CD4-positive, alpha-beta T cell (primary cell): ENCODE measurements at regions of chrX and their contacts with region 1.

Region 1: GRCh38 chrX:149539283-149540130 is 1.3 kb upstream of the EOLA1 start:
- DNase-seq: peak; percentile 77 to 96 (median 85)
- ATAC-seq: peak; percentile 52
- H3K4me3 ChIP-seq: peak overlapping the region; percentile 65
- H3K4me3 Mint-ChIP-seq: peak overlapping the region; percentile 89
- H3K27ac ChIP-seq: peak overlapping the region; percentile 56 to 58
- H3K27ac Mint-ChIP-seq: peak overlapping the region; percentile 96
- H3K4me1 ChIP-seq: peaks cover 16% of the 10 kb centered on the region
- H3K4me1 Mint-ChIP-seq: peaks cover 8% of the 10 kb centered on the region
- H3K27me3 ChIP-seq: no peaks in the 10 kb centered on the region
- H3K27me3 Mint-ChIP-seq: no peaks in the 10 kb centered on the region
- CTCF ChIP-seq: no peak

Region 2: GRCh38 chrX:149512225-149512885 is 27.2 kb before region 1 on chrX:
- CTCF ChIA-PET with region 1: interaction called, 22 read pairs
- POLR2A ChIA-PET with region 1: interaction called, 18 read pairs
- intact Hi-C with region 1: no loop called
- DNase-seq: peak; percentile 35 to 79 (median 52)
- ATAC-seq: peak; percentile 92
- H3K4me3 ChIP-seq: no peak overlapping the region
- H3K4me3 Mint-ChIP-seq: no peak overlapping the region
- H3K27ac ChIP-seq: no peak overlapping the region
- H3K27ac Mint-ChIP-seq: no peak overlapping the region
- H3K4me1 ChIP-seq: peaks cover 20% of the 10 kb centered on the region
- H3K4me1 Mint-ChIP-seq: peaks cover 4% of the 10 kb centered on the region
- H3K27me3 ChIP-seq: no peaks in the 10 kb centered on the region
- H3K27me3 Mint-ChIP-seq: peaks cover 4% of the 10 kb centered on the region
- CTCF ChIP-seq: peak; percentile 49

Region 3: DNA sequence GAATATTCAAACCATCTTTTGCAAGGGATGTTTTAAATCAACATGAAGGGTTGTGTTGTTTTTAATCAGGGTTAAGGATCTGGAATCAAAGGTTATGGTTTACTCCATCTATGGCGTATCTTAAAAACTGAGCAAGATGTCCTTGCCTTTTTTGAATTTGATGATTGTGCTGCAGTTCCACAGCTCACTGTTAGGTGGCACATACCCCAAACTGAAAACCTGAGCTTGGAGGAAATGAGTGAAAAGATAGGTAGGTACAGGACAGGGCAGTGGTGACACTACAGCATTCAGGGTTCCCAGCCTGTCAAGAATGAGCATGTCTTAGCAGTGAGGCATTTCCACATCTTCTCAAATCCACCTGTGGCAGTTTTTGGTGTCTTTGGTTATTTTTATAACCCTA is 11.8 kb before region 1 on chrX:
- CTCF ChIA-PET with region 1: interaction called, 7 read pairs
- POLR2A ChIA-PET with region 1: interaction called, 21 read pairs
- intact Hi-C with region 1: no loop called
- DNase-seq: peak in 4 of 14 experiments; percentile 56 to 78 (median 70)
- ATAC-seq: peak; percentile 25
- H3K4me3 ChIP-seq: no peak overlapping the region
- H3K4me3 Mint-ChIP-seq: peak overlapping the region; percentile 38
- H3K27ac ChIP-seq: no peak overlapping the region
- H3K27ac Mint-ChIP-seq: peak overlapping the region; percentile 82
- H3K4me1 ChIP-seq: peaks cover 36% of the 10 kb centered on the region
- H3K4me1 Mint-ChIP-seq: peaks cover 25% of the 10 kb centered on the region
- H3K27me3 ChIP-seq: no peaks in the 10 kb centered on the region
- H3K27me3 Mint-ChIP-seq: no peaks in the 10 kb centered on the region
- CTCF ChIP-seq: peak; percentile 37

Region 4: GRCh38 chrX:149938427-149939270 is 399.1 kb after region 1 on chrX and contains the start of gene EOLA2:
- CTCF ChIA-PET with region 1: interaction called, 3 read pairs
- POLR2A ChIA-PET with region 1: interaction called, 102 read pairs
- intact Hi-C with region 1: no loop called
- DNase-seq: peak; percentile 83 to 98 (median 90)
- ATAC-seq: peak; percentile 47
- H3K4me3 ChIP-seq: peak within 1 kb of the TSS; percentile 93
- H3K4me3 Mint-ChIP-seq: peak within 1 kb of the TSS; percentile 94
- H3K27ac ChIP-seq: peak within 1 kb of the TSS; percentile 82 to 97
- H3K27ac Mint-ChIP-seq: peak within 1 kb of the TSS; percentile 84
- H3K4me1 ChIP-seq: peaks cover 15% of the 10 kb centered on the region
- H3K4me1 Mint-ChIP-seq: no peaks in the 10 kb centered on the region
- H3K27me3 ChIP-seq: no peaks in the 10 kb centered on the region
- H3K27me3 Mint-ChIP-seq: no peaks in the 10 kb centered on the region
- CTCF ChIP-seq: peak; percentile 34
- total RNA-seq, gene EOLA2: 48.7 to 54.7 TPM